GM12878 (cell line): ENCODE measurements at regions of chr11 and their contacts with region 1.

Region 1: DNA sequence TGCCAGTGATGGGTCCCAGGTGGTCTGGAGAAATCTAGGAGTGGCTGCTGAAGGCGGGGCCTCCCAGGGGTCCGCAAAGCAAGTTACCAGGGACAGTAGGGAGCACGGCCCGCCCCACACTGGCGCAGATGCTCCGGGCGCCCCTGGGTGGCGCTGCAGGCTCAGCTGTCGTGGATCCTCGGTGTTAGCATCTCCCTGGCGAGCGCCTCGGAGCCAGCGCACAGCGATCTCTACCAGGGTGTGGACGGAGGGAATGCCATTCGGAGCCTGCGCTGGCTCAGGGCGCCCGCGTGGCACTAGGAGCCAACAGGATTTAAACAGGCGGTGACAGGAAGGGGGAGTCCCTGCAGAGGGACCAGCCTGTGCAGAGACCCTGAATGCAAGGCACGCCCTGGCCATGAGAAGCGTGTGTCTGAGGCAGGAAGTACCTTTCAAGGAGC is 20.2 kb downstream of the FADS3 start:
- DNase-seq: no peak
- ATAC-seq: peak; percentile 93
- H3K4me3 ChIP-seq: no peak overlapping the region
- H3K27ac ChIP-seq: no peak overlapping the region
- H3K4me1 ChIP-seq: no peaks in the 10 kb centered on the region
- H3K27me3 ChIP-seq: no peaks in the 10 kb centered on the region; a peak in 1 of 4 replicates
- CTCF ChIP-seq: peak; percentile 85 to 94 (median 91)
- EP300 ChIP-seq: no peak
- POLR2A ChIP-seq: no peak
- RAD21 ChIP-seq: peak; percentile 82

Region 2: DNA sequence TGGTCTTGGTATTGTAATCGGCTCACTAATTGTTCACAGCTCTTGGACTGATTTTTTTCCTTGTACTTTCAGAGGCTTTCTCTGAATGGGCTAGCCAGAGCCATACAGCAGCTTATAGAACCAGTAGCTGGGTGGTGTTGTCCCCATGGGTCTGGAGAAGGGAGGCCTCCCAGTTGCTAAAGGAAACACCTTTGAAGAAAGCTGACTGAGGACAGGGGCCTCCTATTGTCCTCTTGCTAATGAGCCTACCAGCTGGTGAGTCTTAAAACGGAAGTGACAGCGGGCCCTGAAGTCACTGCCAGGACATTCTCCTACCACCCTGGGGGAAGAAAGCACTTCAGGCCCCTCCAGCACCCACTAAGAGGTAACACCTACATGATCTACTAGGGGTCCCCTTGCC is 10.2 kb after region 1 on chr11:
- CTCF ChIA-PET with region 1: interaction called, 15 read pairs
- POLR2A ChIA-PET with region 1: interaction called, 3 read pairs
- RAD21 ChIA-PET with region 1: interaction called, 8 read pairs
- SMC1A ChIA-PET with region 1: interaction called, 5 read pairs
- in situ Hi-C with region 1: no loop called
- intact Hi-C with region 1: no loop called
- DNase-seq: no peak
- ATAC-seq: peak; percentile 43
- H3K4me3 ChIP-seq: no peak overlapping the region
- H3K27ac ChIP-seq: no peak overlapping the region
- H3K4me1 ChIP-seq: peaks cover 22% of the 10 kb centered on the region
- H3K27me3 ChIP-seq: no peaks in the 10 kb centered on the region; a peak in 1 of 4 replicates
- CTCF ChIP-seq: no peak
- EP300 ChIP-seq: no peak
- POLR2A ChIP-seq: no peak
- RAD21 ChIP-seq: no peak

Region 3: DNA sequence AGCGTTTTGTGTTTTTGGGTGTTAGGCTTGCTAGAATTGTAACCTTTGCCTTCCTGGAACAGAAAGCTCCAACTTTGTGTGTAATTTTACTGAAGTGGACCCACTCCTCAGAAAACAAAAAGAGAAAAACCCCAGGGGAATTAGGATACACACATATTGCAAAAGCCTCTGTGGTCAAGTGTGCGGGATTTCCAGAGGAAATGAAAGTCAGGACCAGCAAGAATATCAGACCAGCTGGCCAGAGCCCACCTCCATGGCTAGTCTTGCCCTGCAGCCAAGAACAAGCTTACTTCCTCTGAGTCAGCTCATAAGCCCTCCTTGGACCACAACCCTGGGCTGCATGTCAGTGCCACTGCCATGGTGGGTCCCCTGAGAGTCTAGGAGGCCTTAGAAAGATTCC is 133.3 kb after region 1 on chr11:
- CTCF ChIA-PET with region 1: no interaction called
- POLR2A ChIA-PET with region 1: no interaction called
- RAD21 ChIA-PET with region 1: no interaction called
- SMC1A ChIA-PET with region 1: no interaction called
- in situ Hi-C with region 1: no loop called
- intact Hi-C with region 1: no loop called
- DNase-seq: peak; percentile 66
- ATAC-seq: peak; percentile 98
- H3K4me3 ChIP-seq: no peak overlapping the region
- H3K27ac ChIP-seq: peak overlapping the region; percentile 39; the same call in 1 of the 2 replicates
- H3K4me1 ChIP-seq: peaks cover 12% of the 10 kb centered on the region
- H3K27me3 ChIP-seq: no peaks in the 10 kb centered on the region
- CTCF ChIP-seq: no peak
- EP300 ChIP-seq: 0 out of 4 replicates have a peak, but pooled peaks of 1 of the 2 experiments have one; percentile 16
- POLR2A ChIP-seq: no peak
- RAD21 ChIP-seq: no peak